Activated T-helper 2 cell treated with anti-CD3 and anti-CD28 coated beads, Interferon-gamma antibody, Interleukin-2, Interleukin-4, amounts not matched to agents 10 μg/mL and 5 μg/mL and 100 μg/mL, durations not matched to agents 14 hours and 24 hours and 36 hours (primary cell): ENCODE measurements at regions of chr5 and their contacts with region 1.

Region 1: GRCh38 chr5:157130925-157131324 is 11.7 kb downstream of the MED7 start:
- DNase-seq: no peak
- H3K4me3 Mint-ChIP-seq: no peak overlapping the region
- H3K27ac Mint-ChIP-seq: no peak overlapping the region
- H3K4me1 Mint-ChIP-seq: peaks cover 32% of the 10 kb centered on the region
- H3K27me3 Mint-ChIP-seq: no peaks in the 10 kb centered on the region

Region 2: DNA sequence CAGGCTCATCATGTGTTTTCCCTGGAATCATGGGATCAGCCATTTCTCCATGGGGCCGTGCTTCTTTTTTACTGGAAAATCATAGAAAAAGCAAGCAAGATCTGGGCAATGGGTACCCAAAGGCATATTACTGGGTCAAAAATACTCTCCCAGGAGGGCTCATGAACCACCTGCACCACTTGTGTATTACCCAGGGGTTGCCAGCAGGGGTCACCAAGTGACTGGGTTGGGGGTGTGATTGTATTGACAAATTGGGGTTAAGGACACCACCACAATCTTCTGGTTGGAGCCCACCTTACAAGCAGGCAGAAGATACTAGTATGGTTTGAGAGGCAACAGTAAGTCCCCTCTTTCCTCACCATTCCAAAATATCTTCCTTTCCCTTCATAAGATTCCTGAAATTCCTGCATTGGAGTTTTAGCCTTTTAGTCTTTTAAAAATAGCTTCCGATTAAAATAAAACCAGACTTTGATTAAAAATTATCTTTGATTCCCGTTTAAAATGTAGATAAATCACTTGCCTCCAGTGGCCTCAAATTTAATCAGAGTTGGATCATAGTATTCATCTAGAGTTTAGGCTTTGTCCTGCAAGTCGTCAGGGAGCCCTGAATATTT is 1514.0 kb before region 1 on chr5:
- intact Hi-C with region 1: loop called (anchors 5 kb)
- DNase-seq: no peak
- H3K4me3 Mint-ChIP-seq: no peak overlapping the region
- H3K27ac Mint-ChIP-seq: no peak overlapping the region
- H3K4me1 Mint-ChIP-seq: no peaks in the 10 kb centered on the region
- H3K27me3 Mint-ChIP-seq: peaks cover 7% of the 10 kb centered on the region

Region 3: GRCh38 chr5:156420665-156421064 is 710.3 kb before region 1 on chr5:
- intact Hi-C with region 1: loop called (anchors 10 kb)
- DNase-seq: no peak
- H3K4me3 Mint-ChIP-seq: no peak overlapping the region
- H3K27ac Mint-ChIP-seq: no peak overlapping the region
- H3K4me1 Mint-ChIP-seq: no peaks in the 10 kb centered on the region
- H3K27me3 Mint-ChIP-seq: no peaks in the 10 kb centered on the region

Region 4: DNA sequence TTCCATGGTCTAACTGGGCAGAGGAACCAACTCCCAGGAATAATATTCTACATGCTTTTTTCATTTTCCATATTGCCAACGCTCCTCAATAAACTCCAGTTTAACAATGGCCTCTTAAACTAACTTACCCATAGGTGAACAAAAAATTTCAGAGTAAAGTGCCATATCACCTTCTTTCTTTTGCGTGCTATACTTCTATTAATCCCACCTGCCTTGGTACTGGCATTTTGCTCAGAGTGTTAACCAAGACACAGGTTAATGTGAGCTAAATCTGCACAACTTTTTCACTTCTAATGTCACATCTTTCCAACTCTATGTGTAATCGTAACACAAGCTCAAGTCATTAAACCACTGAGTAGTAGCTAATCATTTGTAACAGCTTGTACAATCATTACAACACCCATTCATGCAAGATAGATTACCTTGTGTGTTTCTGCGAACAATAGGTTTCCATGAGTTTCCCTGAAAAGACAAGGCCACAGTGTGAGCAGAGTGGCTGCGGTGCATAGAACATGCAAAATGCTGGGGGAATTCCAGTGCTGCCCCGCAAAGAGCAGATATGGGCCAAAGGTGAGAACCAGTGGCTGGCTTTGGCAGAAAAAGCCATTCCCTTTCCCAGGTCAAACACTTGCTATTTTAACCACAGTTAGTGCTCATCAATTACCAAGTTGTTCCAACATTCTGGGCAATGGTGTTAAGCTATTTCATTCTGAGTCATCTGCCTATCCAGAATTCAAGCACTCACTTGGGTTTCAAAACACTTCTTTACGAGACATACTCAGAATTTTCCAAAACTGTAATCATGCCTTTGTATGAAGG is 210.7 kb before region 1 on chr5:
- intact Hi-C with region 1: loop called (anchors 1 kb)
- DNase-seq: peak; percentile 39
- H3K4me3 Mint-ChIP-seq: peak overlapping the region; percentile 64
- H3K27ac Mint-ChIP-seq: peak overlapping the region; percentile 89
- H3K4me1 Mint-ChIP-seq: peaks cover 57% of the 10 kb centered on the region
- H3K27me3 Mint-ChIP-seq: no peaks in the 10 kb centered on the region

Region 5: GRCh38 chr5:157100140-157100679 is 30.7 kb before region 1 on chr5:
- intact Hi-C with region 1: loop called (anchors 1 kb)
- DNase-seq: no peak
- H3K4me3 Mint-ChIP-seq: peak overlapping the region; percentile 10
- H3K27ac Mint-ChIP-seq: peak overlapping the region; percentile 94
- H3K4me1 Mint-ChIP-seq: peaks cover 30% of the 10 kb centered on the region
- H3K27me3 Mint-ChIP-seq: no peaks in the 10 kb centered on the region